ENCODE measurements at regions of chr13 and their contacts with region 1.

Region 1: GRCh38 chr13:97849305-97849704 is 104.2 kb upstream of the IPO5 start:
- DNase-seq: no peak
- ATAC-seq: peak; percentile 66; the same call in 1 of the 2 replicates
- H3K4me3 ChIP-seq: no peak overlapping the region
- H3K27ac ChIP-seq: no peak overlapping the region
- H3K4me1 ChIP-seq: no peaks in the 10 kb centered on the region
- H3K27me3 ChIP-seq: peaks cover 2% of the 10 kb centered on the region; the same call in 1 of the 2 replicates
- CTCF ChIP-seq: peak; percentile 53

Region 2: DNA sequence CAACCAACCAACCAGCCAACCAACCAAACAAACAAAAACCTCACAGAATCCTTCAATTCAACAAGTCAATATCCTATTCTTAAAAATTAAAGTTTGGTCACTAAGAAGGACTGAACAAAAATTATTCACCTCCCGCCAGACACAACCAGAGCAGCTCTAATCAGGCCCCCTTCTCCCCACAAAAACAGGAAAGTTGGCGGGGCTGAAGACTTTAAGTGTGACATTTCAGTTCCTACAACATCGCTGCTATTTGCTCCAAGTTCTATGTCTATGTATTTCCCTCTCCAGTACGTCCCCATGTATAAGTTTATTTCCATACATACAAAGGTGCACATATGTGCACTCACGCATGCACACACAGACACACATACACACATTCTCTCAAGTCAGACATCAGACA is 760.5 kb after region 1 on chr13:
- CTCF ChIA-PET with region 1: no interaction called
- POLR2A ChIA-PET with region 1: interaction called, 10 read pairs
- in situ Hi-C with region 1: no loop called
- intact Hi-C with region 1: no loop called
- DNase-seq: no peak
- ATAC-seq: no peak
- H3K4me3 ChIP-seq: no peak overlapping the region
- H3K27ac ChIP-seq: no peak overlapping the region
- H3K4me1 ChIP-seq: no peaks in the 10 kb centered on the region
- H3K27me3 ChIP-seq: no peaks in the 10 kb centered on the region
- CTCF ChIP-seq: no peak

Measured in Panc1 (cell line).